Ovary (tissue), 10 donors: ENCODE measurements at regions of chr10 and their contacts with region 1.

Region 1: DNA sequence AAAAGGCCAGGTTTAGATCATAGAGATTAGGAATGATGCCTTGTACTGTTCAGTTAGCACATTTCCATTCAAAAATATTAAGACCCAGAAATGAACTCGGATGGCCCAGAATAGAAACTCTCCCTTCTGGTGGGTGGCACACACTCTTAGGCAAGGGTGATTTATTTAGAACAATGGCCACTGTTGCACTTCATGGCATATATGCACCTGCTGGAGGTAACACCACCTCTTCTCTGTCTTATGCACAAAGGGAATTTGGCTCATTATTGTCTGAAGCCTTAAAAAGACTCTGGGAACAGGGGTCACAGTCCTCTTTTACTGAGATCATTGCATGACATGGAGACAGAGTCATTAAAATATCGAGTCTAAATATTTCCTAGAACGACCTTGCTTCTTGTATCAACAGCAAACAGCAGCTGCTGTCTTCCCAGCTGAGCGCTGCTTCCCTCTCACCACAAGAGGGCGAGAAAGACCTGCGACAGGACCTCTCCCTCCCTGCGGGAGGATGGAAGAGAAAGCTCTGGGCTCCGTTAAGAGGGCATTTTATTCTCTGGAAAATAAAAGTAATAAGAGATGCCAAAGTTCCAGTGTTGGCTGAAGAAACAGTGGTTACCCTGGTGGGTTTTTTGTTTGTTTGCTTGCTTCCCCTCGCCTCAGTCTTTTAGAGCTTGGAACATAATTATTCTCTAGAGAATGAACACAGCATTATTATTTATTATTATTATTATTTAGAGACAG is 13.6 kb upstream of the BAMBI start:
- DNase-seq: peak; percentile 83 to 90 (median 87)
- H3K4me3 ChIP-seq: no peak overlapping the region
- H3K27ac ChIP-seq: peak overlapping the region in 1 of 2 donors; percentile 36
- H3K4me1 ChIP-seq: peaks cover 5% of the 10 kb centered on the region
- H3K27me3 ChIP-seq: no peaks in the 10 kb centered on the region
- CTCF ChIP-seq: peak; percentile 88 to 94 (median 92)
- EP300 ChIP-seq: no peak
- POLR2A ChIP-seq: no peak

Region 2: GRCh38 chr10:28744069-28744768 is 80.5 kb after region 1 on chr10:
- intact Hi-C with region 1: no loop called
- DNase-seq: no peak
- H3K4me3 ChIP-seq: no peak overlapping the region
- H3K27ac ChIP-seq: no peak overlapping the region
- H3K4me1 ChIP-seq: no peaks in the 10 kb centered on the region
- H3K27me3 ChIP-seq: no peaks in the 10 kb centered on the region
- CTCF ChIP-seq: no peak
- EP300 ChIP-seq: no peak
- POLR2A ChIP-seq: no peak

Region 3: DNA sequence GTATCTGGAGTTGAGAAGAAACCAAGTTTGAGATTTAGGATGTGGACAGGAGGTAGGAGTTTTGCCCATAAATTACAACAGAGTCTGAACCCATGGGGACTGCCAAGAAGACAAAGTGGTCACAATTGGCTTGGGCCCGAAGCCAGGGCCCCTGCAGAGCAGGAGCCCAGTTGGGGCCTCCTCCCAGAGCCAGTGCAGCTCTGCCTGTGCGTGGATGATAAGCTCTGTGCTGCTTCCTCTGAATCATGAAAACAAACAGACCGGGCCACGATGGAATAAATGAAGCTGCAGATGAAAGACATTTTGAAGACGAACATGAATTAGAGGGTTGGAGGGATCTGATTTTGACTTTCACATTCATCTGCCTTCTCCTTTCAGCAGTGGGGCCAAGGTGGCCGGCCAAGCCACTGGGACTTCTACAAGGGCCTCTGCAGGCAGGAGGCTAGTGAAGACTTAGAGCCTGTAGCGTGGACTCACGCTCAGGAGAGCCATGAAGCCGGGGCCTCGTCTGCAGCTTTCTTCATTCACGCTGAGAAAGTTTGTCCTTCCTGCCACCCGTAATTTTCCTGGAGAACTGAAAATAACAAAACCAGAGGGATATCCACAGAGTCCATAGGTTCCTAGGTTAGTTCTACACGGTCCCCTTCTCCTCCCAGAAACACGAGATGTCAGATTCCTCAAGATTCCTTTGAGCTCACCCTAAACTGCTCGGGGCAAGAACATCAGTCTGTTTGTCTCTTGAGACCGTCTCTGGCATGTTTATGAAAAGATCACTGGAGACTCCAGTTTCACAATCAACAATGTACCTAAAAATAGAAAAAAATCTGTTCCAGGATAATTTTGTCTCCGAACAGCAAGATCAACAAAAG is 468.4 kb after region 1 on chr10:
- intact Hi-C with region 1: loop called in 1 of 4 experiments (anchors 10 kb)
- DNase-seq: peak in 1 of 5 donors; percentile 27
- H3K4me3 ChIP-seq: no peak overlapping the region
- H3K27ac ChIP-seq: no peak overlapping the region
- H3K4me1 ChIP-seq: peaks cover 3% of the 10 kb centered on the region
- H3K27me3 ChIP-seq: no peaks in the 10 kb centered on the region
- CTCF ChIP-seq: no peak
- EP300 ChIP-seq: no peak
- POLR2A ChIP-seq: no peak

Region 4: DNA sequence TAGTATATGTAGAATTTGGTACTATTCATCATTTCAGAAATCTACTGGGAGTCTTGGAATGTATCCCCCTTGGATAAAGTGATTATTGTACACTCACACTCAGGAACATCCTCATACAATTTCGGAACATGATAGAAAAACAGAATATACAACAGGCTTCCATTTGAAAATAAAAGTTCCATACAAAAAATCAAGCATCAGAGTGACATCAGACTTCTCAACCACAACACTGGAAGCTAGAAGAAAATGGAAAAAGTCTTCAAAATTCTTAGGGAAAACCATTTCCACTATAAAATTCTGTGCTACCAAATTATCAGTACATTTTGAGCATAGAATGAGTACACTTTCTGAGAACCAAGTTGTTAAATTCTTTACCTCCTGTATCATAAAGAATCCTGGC is 633.9 kb after region 1 on chr10:
- intact Hi-C with region 1: loop called in 3 of 4 experiments (anchors 5 kb)
- DNase-seq: no peak
- H3K4me3 ChIP-seq: no peak overlapping the region
- H3K27ac ChIP-seq: no peak overlapping the region
- H3K4me1 ChIP-seq: no peaks in the 10 kb centered on the region
- H3K27me3 ChIP-seq: no peaks in the 10 kb centered on the region
- CTCF ChIP-seq: no peak
- EP300 ChIP-seq: no peak
- POLR2A ChIP-seq: no peak

Region 5: GRCh38 chr10:29304264-29305030 is 640.7 kb after region 1 on chr10:
- intact Hi-C with region 1: loop called in 3 of 4 experiments (anchors 5 kb)
- DNase-seq: peak; percentile 68 to 82 (median 71)
- H3K4me3 ChIP-seq: no peak overlapping the region
- H3K27ac ChIP-seq: peak overlapping the region in 1 of 2 donors; percentile 4
- H3K4me1 ChIP-seq: no peaks in the 10 kb centered on the region
- H3K27me3 ChIP-seq: no peaks in the 10 kb centered on the region
- CTCF ChIP-seq: peak; percentile 76 to 93 (median 85)
- EP300 ChIP-seq: no peak
- POLR2A ChIP-seq: no peak

Region 6: DNA sequence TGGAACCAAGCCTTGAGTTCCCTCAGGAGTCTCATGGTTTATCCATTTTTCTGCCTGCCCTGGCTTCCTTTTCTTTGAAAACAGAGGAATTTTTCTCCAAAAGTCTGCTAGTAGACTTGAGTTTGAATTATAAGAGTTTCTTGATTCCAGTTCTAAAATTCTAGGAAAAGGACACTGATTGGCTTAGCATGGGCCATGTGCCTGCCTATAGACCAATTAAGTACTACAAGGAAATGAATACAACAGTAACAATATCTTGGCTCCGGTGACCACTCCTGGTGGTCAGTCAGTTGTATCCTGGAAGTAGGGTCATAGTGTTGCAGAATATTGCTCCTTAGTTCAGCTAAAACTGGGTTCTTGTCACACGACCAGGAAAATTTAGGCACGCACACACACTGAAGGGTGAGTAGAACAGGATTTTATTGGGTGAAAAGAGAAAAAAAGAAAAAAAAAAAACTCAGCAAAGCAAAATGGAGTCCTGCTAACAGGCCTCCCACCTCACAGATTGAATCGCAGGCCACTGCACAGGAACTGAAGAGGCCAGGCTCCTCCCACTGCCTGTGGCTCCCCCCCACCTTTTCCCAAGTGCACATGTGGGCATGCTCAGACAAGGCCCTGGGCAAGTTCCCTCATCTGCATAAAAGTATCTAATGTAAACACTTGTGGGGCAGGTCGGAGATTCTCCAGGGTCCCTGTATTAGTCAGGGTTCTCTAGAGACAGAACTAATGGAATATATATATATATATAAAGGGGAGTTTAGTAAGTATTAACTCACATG is 780.2 kb after region 1 on chr10:
- intact Hi-C with region 1: loop called in 1 of 4 experiments (anchors 10 kb)
- DNase-seq: no peak
- H3K4me3 ChIP-seq: no peak overlapping the region
- H3K27ac ChIP-seq: no peak overlapping the region
- H3K4me1 ChIP-seq: no peaks in the 10 kb centered on the region
- H3K27me3 ChIP-seq: no peaks in the 10 kb centered on the region
- CTCF ChIP-seq: no peak
- EP300 ChIP-seq: no peak
- POLR2A ChIP-seq: no peak